Transverse colon (tissue), 4 donors: ENCODE measurements at regions of chr4 and their contacts with region 1.

Region 1: DNA sequence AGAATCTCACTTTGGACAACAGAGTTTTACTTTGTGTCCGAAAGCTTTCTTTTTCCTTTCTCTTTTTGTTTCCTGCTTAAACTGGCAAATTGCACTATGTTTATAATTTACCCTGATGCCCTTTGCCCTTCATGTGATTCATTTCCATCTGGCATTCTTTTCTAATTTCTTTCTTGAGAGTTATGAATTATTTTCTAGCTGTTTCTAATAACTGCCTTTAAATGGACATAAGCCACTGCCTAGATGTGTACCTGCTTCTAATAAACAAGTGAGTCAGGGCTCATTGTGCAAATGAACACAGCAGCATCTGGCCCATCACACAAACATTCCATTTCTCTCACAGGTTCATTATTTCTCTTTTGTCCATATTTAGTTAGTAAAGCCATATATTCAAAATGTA is 242.3 kb upstream of the GPRIN3 start:
- DNase-seq: no peak
- H3K4me3 ChIP-seq: no peak overlapping the region
- H3K27ac ChIP-seq: no peak overlapping the region
- H3K4me1 ChIP-seq: no peaks in the 10 kb centered on the region
- H3K27me3 ChIP-seq: no peaks in the 10 kb centered on the region
- CTCF ChIP-seq: no peak
- EP300 ChIP-seq: no peak
- POLR2A ChIP-seq: no peak

Region 2: DNA sequence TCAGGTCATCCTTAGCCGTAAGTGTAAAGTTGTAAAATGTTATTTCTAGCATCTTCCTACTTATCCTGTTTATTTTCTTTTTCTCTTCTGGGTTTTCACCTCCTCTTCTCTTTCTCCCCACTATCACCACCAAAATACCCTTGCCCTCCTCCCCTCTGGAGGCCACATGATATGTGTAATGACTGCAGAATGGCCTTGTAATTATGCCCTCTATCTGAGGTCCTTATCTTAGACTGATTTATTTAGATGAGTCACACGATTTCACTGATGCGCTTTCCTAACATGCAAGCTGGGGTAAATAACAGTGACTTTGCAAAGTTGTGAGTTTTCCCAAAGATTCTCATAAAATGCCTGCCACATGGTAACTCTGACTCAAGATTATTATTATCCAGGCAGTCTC is 10.5 kb before region 1 on chr4:
- in situ Hi-C with region 1: no loop called
- intact Hi-C with region 1: no loop called
- DNase-seq: no peak
- H3K4me3 ChIP-seq: no peak overlapping the region
- H3K27ac ChIP-seq: no peak overlapping the region
- H3K4me1 ChIP-seq: no peaks in the 10 kb centered on the region
- H3K27me3 ChIP-seq: no peaks in the 10 kb centered on the region
- CTCF ChIP-seq: no peak
- EP300 ChIP-seq: no peak
- POLR2A ChIP-seq: no peak

Region 3: DNA sequence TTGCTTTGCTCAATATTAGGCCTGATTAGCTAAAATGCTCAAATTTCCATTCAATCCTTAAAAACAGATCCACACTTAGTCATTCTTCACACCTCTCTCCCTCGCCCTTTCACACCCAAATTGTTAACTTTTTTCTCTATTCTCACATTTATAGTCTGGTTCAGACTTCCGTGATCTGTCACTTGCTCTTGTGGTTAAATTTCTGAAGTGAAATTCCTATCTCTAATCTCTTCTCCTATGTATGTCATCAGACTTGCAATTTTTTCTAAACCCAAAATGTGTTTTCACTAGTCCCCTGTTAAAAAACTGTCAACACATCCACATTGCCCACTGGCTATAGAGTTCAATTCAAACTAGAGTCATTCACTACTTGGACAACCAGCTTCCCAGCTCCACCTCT is 223.9 kb after region 1 on chr4:
- in situ Hi-C with region 1: no loop called
- intact Hi-C with region 1: no loop called
- DNase-seq: no peak
- H3K4me3 ChIP-seq: no peak overlapping the region
- H3K27ac ChIP-seq: no peak overlapping the region
- H3K4me1 ChIP-seq: no peaks in the 10 kb centered on the region
- H3K27me3 ChIP-seq: no peaks in the 10 kb centered on the region
- CTCF ChIP-seq: no peak
- EP300 ChIP-seq: no peak
- POLR2A ChIP-seq: no peak

Region 4: GRCh38 chr4:90234916-90235547 is 685.1 kb after region 1 on chr4:
- in situ Hi-C with region 1: no loop called
- intact Hi-C with region 1: no loop called
- DNase-seq: no peak
- H3K4me3 ChIP-seq: no peak overlapping the region
- H3K27ac ChIP-seq: no peak overlapping the region
- H3K4me1 ChIP-seq: no peaks in the 10 kb centered on the region
- H3K27me3 ChIP-seq: no peaks in the 10 kb centered on the region
- CTCF ChIP-seq: no peak
- EP300 ChIP-seq: no peak
- POLR2A ChIP-seq: no peak

Region 5: GRCh38 chr4:90495936-90496335 is 946.0 kb after region 1 on chr4:
- in situ Hi-C with region 1: no loop called
- intact Hi-C with region 1: loop called (anchors 5 kb)
- DNase-seq: no peak
- H3K4me3 ChIP-seq: no peak overlapping the region
- H3K27ac ChIP-seq: no peak overlapping the region
- H3K4me1 ChIP-seq: no peaks in the 10 kb centered on the region
- H3K27me3 ChIP-seq: no peaks in the 10 kb centered on the region
- CTCF ChIP-seq: no peak
- EP300 ChIP-seq: no peak
- POLR2A ChIP-seq: no peak